GM10248 (cell line): ENCODE measurements at regions of chr16 and their contacts with region 1.

Region 1: DNA sequence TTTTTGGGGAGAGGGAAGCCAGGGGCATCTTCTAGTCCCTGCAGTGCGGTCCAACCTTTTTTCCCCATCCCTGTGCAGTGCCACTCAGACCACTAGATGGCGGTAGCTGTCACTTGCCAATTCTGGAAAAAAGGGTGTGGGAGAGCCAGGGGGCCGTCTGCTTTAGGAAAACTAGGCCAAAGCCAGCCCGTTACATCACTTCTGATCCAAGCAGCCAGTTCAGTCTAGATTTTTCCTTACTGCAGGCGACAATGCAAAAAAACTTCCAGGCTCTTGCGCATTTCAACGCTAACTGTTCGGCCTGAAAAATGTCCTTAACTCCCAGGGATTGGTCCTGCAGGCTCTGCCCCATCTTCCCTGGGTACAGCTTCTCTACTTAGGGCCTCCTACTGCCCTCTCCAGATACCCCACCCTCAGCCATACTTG is 69.2 kb upstream of the CES5A start:
- DNase-seq: peak; percentile 31
- CTCF ChIP-seq: peak; percentile 90

Region 2: GRCh38 chr16:55955845-55956244 is 11.5 kb after region 1 on chr16:
- CTCF ChIA-PET with region 1: interaction called, 66 read pairs
- POLR2A ChIA-PET with region 1: no interaction called
- DNase-seq: no peak
- CTCF ChIP-seq: no peak